ENCODE measurements at regions of chr2 and their contacts with region 1.

Region 1: GRCh38 chr2:30545875-30546274 is 98.8 kb downstream of the LCLAT1 start:
- DNase-seq: no peak
- H3K4me3 ChIP-seq: no peak overlapping the region
- H3K4me3 Mint-ChIP-seq: no peak overlapping the region
- H3K27ac Mint-ChIP-seq: no peak overlapping the region
- H3K4me1 ChIP-seq: peaks cover 44% of the 10 kb centered on the region
- H3K4me1 Mint-ChIP-seq: peaks cover 51% of the 10 kb centered on the region
- H3K27me3 ChIP-seq: no peaks in the 10 kb centered on the region
- H3K27me3 Mint-ChIP-seq: no peaks in the 10 kb centered on the region
- CTCF ChIP-seq: no peak

Region 2: DNA sequence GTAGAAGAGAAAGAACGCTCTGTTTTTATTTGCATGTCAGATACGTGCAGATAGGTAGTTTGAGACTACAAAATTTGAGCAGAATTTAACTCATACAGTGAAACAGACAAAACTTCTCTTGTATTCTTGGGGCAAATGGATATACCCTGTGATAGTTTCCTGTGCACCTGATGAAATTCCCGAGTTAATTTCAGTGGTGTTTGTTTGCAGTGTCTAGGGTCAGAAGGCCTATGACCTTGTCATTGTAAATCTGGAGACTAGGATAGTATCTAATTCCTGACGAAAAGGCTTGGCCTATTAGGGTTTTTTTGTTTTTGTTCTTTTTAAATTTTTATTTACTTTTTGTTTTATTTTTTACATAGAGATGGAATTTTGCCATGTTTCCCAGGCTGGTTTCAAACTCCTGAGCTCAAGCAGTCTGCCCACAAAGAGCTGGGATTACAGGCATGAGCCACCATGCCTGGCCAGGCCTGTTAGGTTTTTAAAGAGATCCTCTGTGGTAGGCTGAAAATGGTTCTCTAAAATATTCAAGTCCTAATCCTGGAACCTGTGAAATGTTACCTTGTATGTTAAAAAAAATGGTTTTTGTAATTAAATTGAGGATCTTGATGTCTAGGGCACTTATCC is 81.2 kb before region 1 on chr2:
- CTCF ChIA-PET with region 1: no interaction called
- POLR2A ChIA-PET with region 1: no interaction called
- intact Hi-C with region 1: loop called (anchors 5 kb)
- DNase-seq: no peak
- H3K4me3 ChIP-seq: no peak overlapping the region
- H3K4me3 Mint-ChIP-seq: no peak overlapping the region
- H3K27ac Mint-ChIP-seq: peak overlapping the region; percentile 23
- H3K4me1 ChIP-seq: no peaks in the 10 kb centered on the region
- H3K4me1 Mint-ChIP-seq: peaks cover 22% of the 10 kb centered on the region
- H3K27me3 ChIP-seq: no peaks in the 10 kb centered on the region
- H3K27me3 Mint-ChIP-seq: no peaks in the 10 kb centered on the region
- CTCF ChIP-seq: no peak

Region 3: GRCh38 chr2:30511122-30512083 is 34.5 kb before region 1 on chr2:
- CTCF ChIA-PET with region 1: no interaction called
- POLR2A ChIA-PET with region 1: no interaction called
- intact Hi-C with region 1: loop called (anchors 2 kb)
- DNase-seq: peak; percentile 31 to 55
- H3K4me3 ChIP-seq: no peak overlapping the region
- H3K4me3 Mint-ChIP-seq: no peak overlapping the region
- H3K27ac Mint-ChIP-seq: peak overlapping the region; percentile 38
- H3K4me1 ChIP-seq: peaks cover 30% of the 10 kb centered on the region
- H3K4me1 Mint-ChIP-seq: peaks cover 44% of the 10 kb centered on the region
- H3K27me3 ChIP-seq: no peaks in the 10 kb centered on the region
- H3K27me3 Mint-ChIP-seq: no peaks in the 10 kb centered on the region
- CTCF ChIP-seq: no peak

Region 4: DNA sequence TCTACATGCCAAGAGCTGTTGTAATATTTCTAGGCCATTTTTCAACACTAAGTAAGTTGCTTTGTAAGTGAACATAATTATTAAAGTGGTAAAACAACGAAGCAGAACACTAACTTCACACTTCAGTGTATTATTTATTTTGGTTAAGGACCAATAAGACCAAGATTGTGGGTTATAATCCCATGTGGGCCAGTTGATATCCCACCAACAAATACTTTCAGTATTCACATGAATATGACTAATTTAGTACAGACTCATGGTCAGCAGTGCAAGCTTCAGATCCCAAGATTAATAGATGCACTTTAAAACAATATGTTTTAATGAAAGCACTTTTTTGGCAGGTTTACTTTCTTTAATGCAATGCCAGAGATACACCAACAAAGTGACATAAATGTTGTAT is 55.5 kb after region 1 on chr2:
- CTCF ChIA-PET with region 1: no interaction called
- POLR2A ChIA-PET with region 1: no interaction called
- intact Hi-C with region 1: loop called (anchors 1 kb)
- DNase-seq: no peak
- H3K4me3 ChIP-seq: no peak overlapping the region
- H3K4me3 Mint-ChIP-seq: no peak overlapping the region
- H3K27ac Mint-ChIP-seq: no peak overlapping the region
- H3K4me1 ChIP-seq: no peaks in the 10 kb centered on the region
- H3K4me1 Mint-ChIP-seq: peaks cover 16% of the 10 kb centered on the region
- H3K27me3 ChIP-seq: no peaks in the 10 kb centered on the region
- H3K27me3 Mint-ChIP-seq: no peaks in the 10 kb centered on the region
- CTCF ChIP-seq: no peak